ENCODE measurements at regions of chr12 and their contacts with region 1.

Region 1: DNA sequence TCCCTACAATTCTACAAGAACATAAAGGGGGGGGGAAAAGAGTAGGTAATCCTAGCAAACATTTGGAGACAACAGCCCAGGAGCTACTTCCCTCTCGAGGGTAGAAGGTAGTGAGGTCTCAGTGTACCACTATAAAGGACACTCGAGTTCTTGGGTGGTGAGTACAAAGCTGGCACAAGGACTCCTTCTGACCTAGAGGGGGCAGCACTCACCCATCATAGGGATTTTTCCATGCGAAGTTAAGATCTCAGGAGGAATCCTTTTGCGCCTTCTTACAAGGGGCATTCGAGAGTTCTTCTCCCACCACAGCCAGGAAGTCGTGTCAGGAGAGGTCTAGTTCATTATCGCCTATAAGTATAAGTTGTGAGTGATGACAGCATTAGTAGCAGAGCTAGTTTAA is 200.2 kb upstream of the RBM19 start:
- DNase-seq: peak; percentile 38 to 71
- H3K4me3 ChIP-seq: no peak overlapping the region
- H3K27ac ChIP-seq: no peak overlapping the region
- H3K4me1 ChIP-seq: 0 out of 7 replicates have a peak, but pooled peaks cover 0 to 2% (median 0%) of the 10 kb centered on the region in 4 experiments
- H3K27me3 ChIP-seq: peaks cover 0 to 12% (median 3%) of the 10 kb centered on the region in 4 experiments; a peak in 4 of 7 replicates
- CTCF ChIP-seq: peak; percentile 62 to 86 (median 78)
- EP300 ChIP-seq: no peak
- POLR2A ChIP-seq: no peak
- RAD21 ChIP-seq: peak; percentile 94 to 97

Region 2: DNA sequence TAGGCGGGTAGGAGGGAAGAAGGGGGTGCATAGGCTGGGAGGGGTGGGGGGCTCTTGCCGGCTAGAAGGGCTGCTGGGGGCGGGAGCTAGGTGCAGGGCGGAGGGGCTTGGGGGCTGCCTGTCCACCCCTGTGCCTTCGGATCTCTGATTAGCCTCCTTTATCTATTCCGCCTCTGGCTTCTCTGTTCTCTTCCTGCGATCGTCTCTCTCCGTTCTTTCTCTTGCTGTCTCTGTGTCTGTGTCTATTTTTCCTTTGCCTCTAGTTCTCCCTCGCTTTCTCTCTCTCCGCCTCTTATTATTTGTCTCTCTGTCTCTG is 527.9 kb before region 1 on chr12:
- CTCF ChIA-PET with region 1: no interaction called
- POLR2A ChIA-PET with region 1: no interaction called
- DNase-seq: no peak
- H3K4me3 ChIP-seq: peak overlapping the region in 2 of 4 experiments; percentile 32 to 54; a peak in 6 of 8 replicates
- H3K27ac ChIP-seq: no peak overlapping the region
- H3K4me1 ChIP-seq: peaks cover 0 to 10% (median 4%) of the 10 kb centered on the region in 4 experiments
- H3K27me3 ChIP-seq: peaks cover 0 to 4% (median 0%) of the 10 kb centered on the region in 4 experiments; a peak in 3 of 7 replicates
- CTCF ChIP-seq: no peak
- EP300 ChIP-seq: no peak
- POLR2A ChIP-seq: no peak
- RAD21 ChIP-seq: no peak

Region 3: GRCh38 chr12:114013575-114014345 is 152.6 kb before region 1 on chr12:
- CTCF ChIA-PET with region 1: interaction called, 28 read pairs
- POLR2A ChIA-PET with region 1: no interaction called
- DNase-seq: peak; percentile 33 to 61
- H3K4me3 ChIP-seq: no peak overlapping the region
- H3K27ac ChIP-seq: no peak overlapping the region
- H3K4me1 ChIP-seq: no peaks in the 10 kb centered on the region
- H3K27me3 ChIP-seq: no peaks in the 10 kb centered on the region
- CTCF ChIP-seq: peak in 2 of 3 experiments; percentile 78; a peak in 3 of 4 replicates
- EP300 ChIP-seq: no peak
- POLR2A ChIP-seq: no peak
- RAD21 ChIP-seq: peak; percentile 93

Region 4: GRCh38 chr12:114090211-114090610 is 76.2 kb before region 1 on chr12:
- CTCF ChIA-PET with region 1: no interaction called
- POLR2A ChIA-PET with region 1: no interaction called
- DNase-seq: no peak
- H3K4me3 ChIP-seq: no peak overlapping the region
- H3K27ac ChIP-seq: no peak overlapping the region
- H3K4me1 ChIP-seq: no peaks in the 10 kb centered on the region
- H3K27me3 ChIP-seq: peaks cover 0 to 1% (median 0%) of the 10 kb centered on the region in 4 experiments; a peak in 2 of 7 replicates
- CTCF ChIP-seq: no peak
- EP300 ChIP-seq: no peak
- POLR2A ChIP-seq: no peak
- RAD21 ChIP-seq: no peak

Region 5: DNA sequence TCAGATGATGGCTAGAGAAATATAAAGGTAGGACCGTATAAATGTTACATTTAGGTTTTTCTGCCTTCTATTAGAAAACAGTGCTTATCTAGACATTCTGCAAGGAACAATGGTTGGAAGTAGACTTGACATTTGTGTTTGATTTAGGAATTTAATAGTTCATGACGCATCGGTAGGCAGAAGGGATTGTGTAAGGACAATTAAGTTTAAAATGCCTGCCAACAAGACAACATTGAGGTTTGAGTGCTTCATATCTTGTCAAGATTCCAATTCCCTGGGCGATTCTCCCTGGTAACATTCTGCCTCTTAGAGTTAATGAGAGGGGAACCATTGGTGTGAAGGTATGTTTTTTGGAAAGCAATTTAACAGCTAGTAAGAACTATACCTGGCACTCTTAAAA is 13.5 kb before region 1 on chr12:
- CTCF ChIA-PET with region 1: interaction called, 102 read pairs
- POLR2A ChIA-PET with region 1: no interaction called
- DNase-seq: no peak
- H3K4me3 ChIP-seq: no peak overlapping the region
- H3K27ac ChIP-seq: no peak overlapping the region
- H3K4me1 ChIP-seq: no peaks in the 10 kb centered on the region
- H3K27me3 ChIP-seq: 0 out of 7 replicates have a peak, but pooled peaks cover 0 to 8% (median 0%) of the 10 kb centered on the region in 4 experiments
- CTCF ChIP-seq: no peak
- EP300 ChIP-seq: no peak
- POLR2A ChIP-seq: no peak
- RAD21 ChIP-seq: no peak

Region 6: GRCh38 chr12:114294303-114294685 is 127.9 kb after region 1 on chr12:
- CTCF ChIA-PET with region 1: no interaction called
- POLR2A ChIA-PET with region 1: no interaction called
- DNase-seq: no peak
- H3K4me3 ChIP-seq: no peak overlapping the region
- H3K27ac ChIP-seq: no peak overlapping the region
- H3K4me1 ChIP-seq: no peaks in the 10 kb centered on the region
- H3K27me3 ChIP-seq: no peaks in the 10 kb centered on the region; a peak in 1 of 7 replicates
- CTCF ChIP-seq: no peak
- EP300 ChIP-seq: no peak
- POLR2A ChIP-seq: no peak
- RAD21 ChIP-seq: no peak

Region 7: DNA sequence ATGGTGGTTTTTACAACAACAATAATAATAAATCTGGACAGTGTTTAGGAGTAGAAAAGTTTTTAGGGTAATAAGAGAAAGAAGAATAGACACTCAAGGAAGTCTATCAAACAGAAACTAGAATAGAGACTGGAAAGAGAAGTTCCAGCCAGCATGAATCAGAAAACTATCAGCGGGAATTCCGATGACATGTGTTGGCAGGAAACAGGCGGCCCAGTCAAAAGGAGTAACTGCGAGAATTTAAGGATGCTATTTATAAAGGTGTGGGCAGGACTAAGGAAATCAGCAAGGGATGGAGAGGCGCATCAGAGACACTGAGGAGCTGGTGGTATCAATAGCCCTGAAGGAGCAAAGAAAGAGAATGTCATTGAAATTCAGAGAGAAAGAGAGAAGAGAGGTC is 149.7 kb after region 1 on chr12:
- CTCF ChIA-PET with region 1: interaction called, 10 read pairs
- POLR2A ChIA-PET with region 1: no interaction called
- DNase-seq: peak in 1 of 2 experiments; percentile 9
- H3K4me3 ChIP-seq: no peak overlapping the region
- H3K27ac ChIP-seq: no peak overlapping the region
- H3K4me1 ChIP-seq: no peaks in the 10 kb centered on the region
- H3K27me3 ChIP-seq: no peaks in the 10 kb centered on the region; a peak in 3 of 7 replicates
- CTCF ChIP-seq: no peak
- EP300 ChIP-seq: no peak
- POLR2A ChIP-seq: no peak
- RAD21 ChIP-seq: no peak

Region 8: GRCh38 chr12:114395755-114396152 is 229.4 kb after region 1 on chr12:
- CTCF ChIA-PET with region 1: interaction called, 37 read pairs
- POLR2A ChIA-PET with region 1: no interaction called
- DNase-seq: no peak
- H3K4me3 ChIP-seq: peak overlapping the region in 2 of 4 experiments; percentile 15 to 44; a peak in 4 of 8 replicates
- H3K27ac ChIP-seq: no peak overlapping the region
- H3K4me1 ChIP-seq: peaks cover 12 to 38% (median 22%) of the 10 kb centered on the region in 4 experiments
- H3K27me3 ChIP-seq: peaks cover 71 to 84% (median 81%) of the 10 kb centered on the region in 4 experiments
- CTCF ChIP-seq: no peak
- EP300 ChIP-seq: no peak
- POLR2A ChIP-seq: no peak
- RAD21 ChIP-seq: no peak

Region 9: GRCh38 chr12:114499338-114499737 is 333.0 kb after region 1 on chr12:
- CTCF ChIA-PET with region 1: interaction called, 17 read pairs
- POLR2A ChIA-PET with region 1: no interaction called
- DNase-seq: no peak
- H3K4me3 ChIP-seq: no peak overlapping the region
- H3K27ac ChIP-seq: no peak overlapping the region
- H3K4me1 ChIP-seq: no peaks in the 10 kb centered on the region
- H3K27me3 ChIP-seq: peaks cover 3 to 30% (median 21%) of the 10 kb centered on the region in 4 experiments
- CTCF ChIP-seq: no peak
- EP300 ChIP-seq: no peak
- POLR2A ChIP-seq: no peak
- RAD21 ChIP-seq: no peak

Measured in H1 (cell line).